Posterior vena cava (tissue), 2 donors: ENCODE measurements at regions of chr3 and their contacts with region 1.

Region 1: DNA sequence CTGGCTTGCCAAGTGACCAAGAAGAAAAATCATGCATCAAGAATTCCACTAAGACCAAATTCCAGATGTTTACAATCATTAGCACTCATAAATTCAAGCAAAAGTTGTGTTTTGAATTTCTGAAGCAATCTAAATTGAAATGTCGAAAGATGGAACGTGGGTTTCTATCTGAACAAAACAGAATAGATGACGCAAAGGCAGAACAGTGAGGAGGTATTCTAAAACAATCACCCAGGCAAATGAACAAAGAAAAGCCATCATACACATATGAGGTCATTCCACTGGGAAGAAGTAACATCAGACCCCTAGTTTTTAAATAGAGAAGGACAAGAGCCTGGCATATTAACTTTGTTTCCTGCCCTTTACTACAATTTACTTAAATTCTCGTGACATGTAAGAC is 58.0 kb downstream of the MCF2L2 start:
- DNase-seq: no peak

Region 2: GRCh38 chr3:183188895-183189462 is 181.4 kb before region 1 on chr3:
- intact Hi-C with region 1: loop called in 1 of 2 experiments (anchors 5 kb)
- DNase-seq: no peak

Region 3: GRCh38 chr3:183349421-183350157 is 20.8 kb before region 1 on chr3:
- intact Hi-C with region 1: no loop called
- DNase-seq: no peak